ENCODE measurements at regions of chr20 and their contacts with region 1.

Region 1: GRCh38 chr20:10369723-10370090 is 64.3 kb downstream of the MKKS start:
- DNase-seq: no peak
- ATAC-seq: peak; percentile 14
- H3K4me3 ChIP-seq: peak overlapping the region; percentile 2 to 54 (median 28); a peak in 4 of 6 replicates
- H3K27ac ChIP-seq: peak overlapping the region; percentile 70
- H3K4me1 ChIP-seq: peaks cover 76% of the 10 kb centered on the region
- H3K27me3 ChIP-seq: no peaks in the 10 kb centered on the region
- CTCF ChIP-seq: no peak
- EP300 ChIP-seq: no peak
- POLR2A ChIP-seq: no peak
- RAD21 ChIP-seq: no peak

Region 2: GRCh38 chr20:10263385-10264165 is 106.1 kb before region 1 on chr20:
- CTCF ChIA-PET with region 1: no interaction called
- POLR2A ChIA-PET with region 1: no interaction called
- in situ Hi-C with region 1: no loop called
- intact Hi-C with region 1: loop called (anchors 5 kb)
- DNase-seq: peak; percentile 95
- ATAC-seq: peak; percentile 100
- H3K4me3 ChIP-seq: no peak overlapping the region; a peak in 1 of 6 replicates
- H3K27ac ChIP-seq: no peak overlapping the region
- H3K4me1 ChIP-seq: peaks cover 27% of the 10 kb centered on the region
- H3K27me3 ChIP-seq: peaks cover 0 to 18% of the 10 kb centered on the region in 2 experiments; a peak in 3 of 5 replicates
- CTCF ChIP-seq: no peak
- EP300 ChIP-seq: peak; percentile 70 to 94; a peak in 3 of 4 replicates
- POLR2A ChIP-seq: no peak
- RAD21 ChIP-seq: no peak

Region 3: DNA sequence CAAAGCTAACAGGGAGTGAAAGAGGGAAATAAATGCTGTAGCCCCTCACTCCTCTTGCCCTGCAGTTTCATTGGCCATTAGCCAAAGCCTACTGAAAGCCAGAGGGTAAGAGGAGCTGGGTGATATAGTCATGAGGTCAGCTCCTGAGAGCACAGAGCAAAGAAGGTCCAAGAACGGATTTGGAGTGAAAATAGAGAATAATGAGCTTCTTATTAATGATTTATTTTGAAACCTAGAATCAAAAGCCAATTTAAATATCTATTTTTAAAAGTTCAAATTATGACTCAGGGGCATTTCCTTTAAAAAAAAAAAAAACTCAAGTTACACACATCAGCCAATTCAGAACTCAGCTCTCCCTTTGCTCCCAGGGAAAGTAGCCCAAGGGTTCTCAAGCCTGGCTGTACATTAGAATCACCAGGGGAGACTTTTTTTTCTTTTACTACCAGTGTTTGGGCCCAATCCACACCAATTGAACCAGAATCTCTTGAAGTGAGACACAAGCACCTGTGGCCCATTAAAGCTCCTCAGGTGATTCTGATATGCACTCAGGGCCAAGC is 71.9 kb before region 1 on chr20:
- CTCF ChIA-PET with region 1: no interaction called
- POLR2A ChIA-PET with region 1: no interaction called
- in situ Hi-C with region 1: no loop called
- intact Hi-C with region 1: no loop called
- DNase-seq: no peak
- ATAC-seq: no peak
- H3K4me3 ChIP-seq: no peak overlapping the region
- H3K27ac ChIP-seq: no peak overlapping the region
- H3K4me1 ChIP-seq: no peaks in the 10 kb centered on the region
- H3K27me3 ChIP-seq: no peaks in the 10 kb centered on the region
- CTCF ChIP-seq: no peak
- EP300 ChIP-seq: no peak
- POLR2A ChIP-seq: no peak
- RAD21 ChIP-seq: no peak

Region 4: DNA sequence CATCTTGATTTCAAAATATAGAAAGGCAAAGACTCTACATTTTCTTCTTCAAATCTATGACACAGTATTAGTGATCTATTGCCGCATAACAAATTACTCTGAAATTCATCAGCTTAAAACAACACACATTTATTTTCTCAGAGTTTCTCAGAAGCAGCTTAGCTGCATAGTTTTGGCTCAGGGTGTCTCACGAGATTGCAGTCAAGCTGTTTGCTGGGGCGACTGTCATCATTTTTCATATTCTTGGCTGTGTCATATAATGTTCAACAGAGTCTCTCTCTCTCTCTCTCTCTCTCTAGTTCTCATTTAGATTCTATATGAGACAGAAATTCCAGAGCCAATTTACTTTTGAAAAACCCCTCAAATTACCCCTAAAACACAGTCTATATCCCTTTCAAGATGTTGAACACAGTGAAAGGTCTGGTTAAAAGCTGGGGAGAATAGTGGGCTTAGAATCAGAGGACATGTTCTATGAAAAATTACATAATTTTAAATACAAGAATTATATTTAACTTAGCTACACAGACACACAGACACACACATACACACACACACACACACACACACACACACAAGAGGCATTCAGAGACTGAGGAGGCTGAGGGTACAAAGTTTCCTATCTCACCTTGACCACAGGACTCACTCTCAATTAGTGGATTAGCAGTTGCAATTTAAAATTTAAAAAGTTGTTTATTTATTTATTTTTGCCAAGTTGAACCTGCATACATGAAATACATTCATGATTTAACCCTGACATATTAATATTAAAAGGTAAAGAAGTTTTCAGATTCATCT is 22.4 kb before region 1 on chr20:
- CTCF ChIA-PET with region 1: no interaction called
- POLR2A ChIA-PET with region 1: interaction called, 4 read pairs
- in situ Hi-C with region 1: no loop called
- intact Hi-C with region 1: loop called (anchors 1 kb)
- DNase-seq: no peak
- ATAC-seq: no peak
- H3K4me3 ChIP-seq: no peak overlapping the region
- H3K27ac ChIP-seq: peak overlapping the region; percentile 30
- H3K4me1 ChIP-seq: peaks cover 52% of the 10 kb centered on the region
- H3K27me3 ChIP-seq: no peaks in the 10 kb centered on the region
- CTCF ChIP-seq: no peak
- EP300 ChIP-seq: no peak; a peak in 1 of 4 replicates
- POLR2A ChIP-seq: no peak
- RAD21 ChIP-seq: no peak

Region 5: GRCh38 chr20:10404023-10404628 is 34.4 kb after region 1 on chr20:
- CTCF ChIA-PET with region 1: no interaction called
- POLR2A ChIA-PET with region 1: no interaction called
- in situ Hi-C with region 1: no loop called
- intact Hi-C with region 1: loop called (anchors 5 kb)
- DNase-seq: no peak
- ATAC-seq: peak; percentile 90
- H3K4me3 ChIP-seq: no peak overlapping the region
- H3K27ac ChIP-seq: no peak overlapping the region
- H3K4me1 ChIP-seq: peaks cover 2% of the 10 kb centered on the region
- H3K27me3 ChIP-seq: no peaks in the 10 kb centered on the region
- CTCF ChIP-seq: peak; percentile 48
- EP300 ChIP-seq: no peak
- POLR2A ChIP-seq: no peak
- RAD21 ChIP-seq: peak; percentile 23; the same call in 1 of the 2 replicates

Region 6: DNA sequence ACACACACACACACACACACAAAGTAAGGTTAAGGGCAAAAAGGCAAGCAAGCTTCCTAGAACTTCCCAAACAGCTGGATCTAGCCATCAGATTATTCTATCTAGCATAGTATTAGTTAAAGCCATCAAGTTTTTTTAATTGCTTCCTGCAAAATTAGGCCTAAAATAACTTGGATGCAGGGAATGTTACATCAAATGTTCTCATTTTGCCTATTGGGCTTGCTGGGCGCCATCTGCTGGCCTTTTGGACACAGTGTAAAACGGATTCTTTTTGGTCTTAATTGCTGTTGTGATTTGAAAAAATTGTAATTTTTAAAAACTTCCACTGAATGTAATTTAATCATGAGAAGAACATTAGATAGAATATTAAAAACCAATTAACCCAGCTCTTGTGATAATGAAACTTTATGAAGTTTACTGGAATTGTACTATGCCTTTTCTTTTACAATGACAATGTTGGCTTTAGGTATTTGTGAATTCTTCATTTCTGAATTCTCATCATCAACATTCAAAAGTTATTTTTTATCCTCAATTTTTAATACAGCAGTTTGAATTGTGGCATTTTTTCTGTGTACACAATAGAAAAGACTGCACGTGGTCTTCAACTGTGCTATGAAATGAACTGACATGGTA is 57.5 kb after region 1 on chr20:
- CTCF ChIA-PET with region 1: no interaction called
- POLR2A ChIA-PET with region 1: no interaction called
- in situ Hi-C with region 1: no loop called
- intact Hi-C with region 1: loop called (anchors 2 kb)
- DNase-seq: peak; percentile 71
- ATAC-seq: peak; percentile 42; the same call in 1 of the 3 replicates
- H3K4me3 ChIP-seq: no peak overlapping the region
- H3K27ac ChIP-seq: no peak overlapping the region
- H3K4me1 ChIP-seq: peaks cover 65% of the 10 kb centered on the region
- H3K27me3 ChIP-seq: no peaks in the 10 kb centered on the region
- CTCF ChIP-seq: peak; percentile 83
- EP300 ChIP-seq: no peak
- POLR2A ChIP-seq: no peak
- RAD21 ChIP-seq: peak; percentile 84

Region 7: GRCh38 chr20:10581823-10582222 is 212.1 kb after region 1 on chr20:
- CTCF ChIA-PET with region 1: no interaction called
- POLR2A ChIA-PET with region 1: no interaction called
- in situ Hi-C with region 1: no loop called
- intact Hi-C with region 1: no loop called
- DNase-seq: peak; percentile 56
- ATAC-seq: peak; percentile 46; the same call in 2 of the 3 replicates
- H3K4me3 ChIP-seq: no peak overlapping the region
- H3K27ac ChIP-seq: no peak overlapping the region
- H3K4me1 ChIP-seq: peaks cover 24% of the 10 kb centered on the region
- H3K27me3 ChIP-seq: no peaks in the 10 kb centered on the region
- CTCF ChIP-seq: no peak
- EP300 ChIP-seq: peak in 1 of 2 experiments; percentile 22; a peak in 1 of 4 replicates
- POLR2A ChIP-seq: no peak
- RAD21 ChIP-seq: no peak

Region 8: DNA sequence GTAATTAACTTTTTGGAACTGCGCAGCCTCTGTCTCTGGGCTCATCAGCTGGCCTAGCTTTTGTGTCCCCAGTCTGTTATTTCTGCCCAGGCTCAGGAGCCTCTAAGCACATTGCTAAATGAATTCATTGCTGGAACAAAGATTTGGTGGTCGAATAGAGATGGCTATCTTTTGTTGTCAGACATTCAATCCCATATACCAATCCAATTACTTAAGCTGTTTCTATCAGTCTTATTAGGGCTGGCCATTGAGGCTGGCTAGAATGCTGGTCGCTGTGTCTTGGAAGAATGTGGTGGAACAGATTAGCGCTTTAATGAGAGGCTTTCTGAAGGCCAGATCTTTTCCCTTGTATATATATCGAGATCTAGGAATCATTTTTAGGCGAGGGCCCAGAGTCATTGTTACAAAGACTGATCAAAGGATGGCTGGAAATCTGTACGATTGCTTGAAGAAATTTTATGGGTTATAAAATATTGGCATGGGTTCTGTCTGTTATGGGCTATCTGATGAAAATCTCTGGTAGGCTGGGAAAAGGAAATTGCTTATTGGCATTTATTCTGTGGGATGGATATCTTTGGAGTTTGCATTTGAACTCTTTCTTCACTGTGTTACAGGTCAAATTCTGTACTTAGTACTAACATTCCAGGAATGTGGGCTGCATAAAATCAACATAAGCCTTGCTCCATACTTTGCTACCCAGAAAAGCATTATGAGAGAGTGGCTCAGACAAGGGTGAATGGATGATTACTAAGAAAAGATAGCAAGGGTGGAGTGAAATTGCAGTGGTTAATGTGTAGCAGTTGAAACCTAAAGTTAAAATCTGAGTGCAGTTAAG is 338.9 kb after region 1 on chr20:
- CTCF ChIA-PET with region 1: no interaction called
- POLR2A ChIA-PET with region 1: no interaction called
- in situ Hi-C with region 1: no loop called
- intact Hi-C with region 1: loop called (anchors 5 kb)
- DNase-seq: peak; percentile 99
- ATAC-seq: peak; percentile 88
- H3K4me3 ChIP-seq: peak overlapping the region in 1 of 3 experiments; percentile 32; a peak in 1 of 6 replicates
- H3K27ac ChIP-seq: peak overlapping the region; percentile 93
- H3K4me1 ChIP-seq: peaks cover 88% of the 10 kb centered on the region
- H3K27me3 ChIP-seq: no peaks in the 10 kb centered on the region
- CTCF ChIP-seq: 0 out of 2 replicates have a peak, but pooled peaks have one; percentile 4
- EP300 ChIP-seq: peak; percentile 98 to 99
- POLR2A ChIP-seq: no peak
- RAD21 ChIP-seq: peak; percentile 57; the same call in 1 of the 2 replicates

Measured in HepG2 (cell line).